CD14-positive monocyte (primary cell): ENCODE measurements at regions of chr4 and their contacts with region 1.

Region 1: GRCh38 chr4:110310795-110311194 is 112.4 kb upstream of the ELOVL6 start:
- DNase-seq: peak; percentile 35 to 72 (median 39)
- H3K4me3 ChIP-seq: no peak overlapping the region
- H3K4me3 Mint-ChIP-seq: no peak overlapping the region
- H3K27ac ChIP-seq: no peak overlapping the region
- H3K27ac Mint-ChIP-seq: no peak overlapping the region
- H3K4me1 ChIP-seq: no peaks in the 10 kb centered on the region
- H3K4me1 Mint-ChIP-seq: peaks cover 2% of the 10 kb centered on the region
- H3K27me3 ChIP-seq: peaks cover 0 to 4% of the 10 kb centered on the region in 2 donors
- H3K27me3 Mint-ChIP-seq: peaks cover 3 to 10% (median 4%) of the 10 kb centered on the region in 3 donors
- CTCF ChIP-seq: no peak

Region 2: GRCh38 chr4:109998867-109999584 is 311.8 kb before region 1 on chr4:
- intact Hi-C with region 1: loop called in 1 of 2 experiments (anchors 10 kb)
- DNase-seq: peak; percentile 49 to 74 (median 64)
- H3K4me3 ChIP-seq: no peak overlapping the region
- H3K4me3 Mint-ChIP-seq: no peak overlapping the region
- H3K27ac ChIP-seq: no peak overlapping the region
- H3K27ac Mint-ChIP-seq: no peak overlapping the region
- H3K4me1 ChIP-seq: peaks cover 23 to 41% of the 10 kb centered on the region in 2 donors
- H3K4me1 Mint-ChIP-seq: peaks cover 35% of the 10 kb centered on the region
- H3K27me3 ChIP-seq: peaks cover 16 to 23% of the 10 kb centered on the region in 2 donors
- H3K27me3 Mint-ChIP-seq: peaks cover 14 to 18% (median 17%) of the 10 kb centered on the region in 3 donors
- CTCF ChIP-seq: peak; percentile 79

Region 3: GRCh38 chr4:110132816-110133719 is 177.7 kb before region 1 on chr4:
- intact Hi-C with region 1: no loop called
- DNase-seq: no peak
- H3K4me3 ChIP-seq: no peak overlapping the region
- H3K4me3 Mint-ChIP-seq: no peak overlapping the region
- H3K27ac ChIP-seq: no peak overlapping the region
- H3K27ac Mint-ChIP-seq: peak overlapping the region in 1 of 7 donors; percentile 43
- H3K4me1 ChIP-seq: no peaks in the 10 kb centered on the region
- H3K4me1 Mint-ChIP-seq: no peaks in the 10 kb centered on the region
- H3K27me3 ChIP-seq: no peaks in the 10 kb centered on the region
- H3K27me3 Mint-ChIP-seq: peaks cover 0 to 2% (median 0%) of the 10 kb centered on the region in 3 donors
- CTCF ChIP-seq: no peak

Region 4: DNA sequence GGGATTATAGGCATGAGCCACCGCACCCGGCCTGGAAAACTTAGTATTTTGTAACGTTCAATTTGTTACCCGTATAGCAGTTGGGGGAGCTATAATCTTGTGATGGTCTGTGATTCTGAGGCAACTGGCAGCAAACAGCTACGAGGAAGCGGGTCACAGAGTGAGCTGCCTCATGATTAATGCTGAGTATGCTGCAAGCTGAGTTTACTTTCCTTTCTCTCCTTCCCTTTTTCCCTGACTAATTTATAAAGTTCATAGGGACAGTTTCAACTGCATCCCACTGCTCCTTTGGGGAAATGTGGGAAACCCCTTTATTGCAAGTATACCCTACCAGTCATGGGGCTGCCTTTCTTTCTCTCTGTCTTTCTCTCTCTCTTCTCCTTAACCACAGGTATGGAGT is 94.7 kb before region 1 on chr4:
- intact Hi-C with region 1: no loop called
- DNase-seq: peak in 1 of 3 donors; percentile 4
- H3K4me3 ChIP-seq: no peak overlapping the region
- H3K4me3 Mint-ChIP-seq: no peak overlapping the region
- H3K27ac ChIP-seq: no peak overlapping the region
- H3K27ac Mint-ChIP-seq: no peak overlapping the region
- H3K4me1 ChIP-seq: no peaks in the 10 kb centered on the region
- H3K4me1 Mint-ChIP-seq: peaks cover 1% of the 10 kb centered on the region
- H3K27me3 ChIP-seq: no peaks in the 10 kb centered on the region
- H3K27me3 Mint-ChIP-seq: peaks cover 0 to 6% (median 1%) of the 10 kb centered on the region in 3 donors
- CTCF ChIP-seq: no peak

Region 5: DNA sequence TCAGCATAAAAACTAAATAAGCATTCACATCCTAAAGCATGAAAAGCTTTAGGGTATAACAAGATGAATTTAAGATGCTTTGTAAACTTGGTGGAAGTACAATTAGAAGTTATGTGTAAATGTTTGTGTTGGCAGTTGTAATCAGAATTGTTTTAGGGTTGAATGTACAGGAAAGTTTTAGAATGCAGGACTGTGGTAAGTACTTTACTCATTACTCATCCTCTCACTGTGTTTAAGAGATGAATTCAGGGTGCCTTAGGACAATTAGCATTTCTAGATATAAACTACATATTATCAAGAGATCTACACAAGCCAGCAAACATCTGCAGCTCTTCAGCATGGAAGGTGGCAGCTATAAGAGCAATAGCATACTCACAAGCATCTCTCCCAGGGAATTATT is 34.9 kb before region 1 on chr4:
- intact Hi-C with region 1: no loop called
- DNase-seq: no peak
- H3K4me3 ChIP-seq: no peak overlapping the region
- H3K4me3 Mint-ChIP-seq: no peak overlapping the region
- H3K27ac ChIP-seq: no peak overlapping the region
- H3K27ac Mint-ChIP-seq: no peak overlapping the region
- H3K4me1 ChIP-seq: no peaks in the 10 kb centered on the region
- H3K4me1 Mint-ChIP-seq: no peaks in the 10 kb centered on the region
- H3K27me3 ChIP-seq: no peaks in the 10 kb centered on the region
- H3K27me3 Mint-ChIP-seq: peaks cover 0 to 7% (median 1%) of the 10 kb centered on the region in 3 donors
- CTCF ChIP-seq: no peak

Region 6: GRCh38 chr4:110510955-110511544 is 200.3 kb after region 1 on chr4:
- intact Hi-C with region 1: loop called (anchors 5 to 10 kb)
- DNase-seq: peak; percentile 34 to 54 (median 47)
- H3K4me3 ChIP-seq: no peak overlapping the region
- H3K4me3 Mint-ChIP-seq: no peak overlapping the region
- H3K27ac ChIP-seq: no peak overlapping the region
- H3K27ac Mint-ChIP-seq: no peak overlapping the region
- H3K4me1 ChIP-seq: peaks cover 4 to 7% of the 10 kb centered on the region in 2 donors
- H3K4me1 Mint-ChIP-seq: peaks cover 8% of the 10 kb centered on the region
- H3K27me3 ChIP-seq: no peaks in the 10 kb centered on the region
- H3K27me3 Mint-ChIP-seq: peaks cover 0 to 2% (median under 1%) of the 10 kb centered on the region in 3 donors
- CTCF ChIP-seq: peak; percentile 79